Tibial artery (tissue), 4 donors: ENCODE measurements at regions of chr6 and their contacts with region 1.

Region 1: DNA sequence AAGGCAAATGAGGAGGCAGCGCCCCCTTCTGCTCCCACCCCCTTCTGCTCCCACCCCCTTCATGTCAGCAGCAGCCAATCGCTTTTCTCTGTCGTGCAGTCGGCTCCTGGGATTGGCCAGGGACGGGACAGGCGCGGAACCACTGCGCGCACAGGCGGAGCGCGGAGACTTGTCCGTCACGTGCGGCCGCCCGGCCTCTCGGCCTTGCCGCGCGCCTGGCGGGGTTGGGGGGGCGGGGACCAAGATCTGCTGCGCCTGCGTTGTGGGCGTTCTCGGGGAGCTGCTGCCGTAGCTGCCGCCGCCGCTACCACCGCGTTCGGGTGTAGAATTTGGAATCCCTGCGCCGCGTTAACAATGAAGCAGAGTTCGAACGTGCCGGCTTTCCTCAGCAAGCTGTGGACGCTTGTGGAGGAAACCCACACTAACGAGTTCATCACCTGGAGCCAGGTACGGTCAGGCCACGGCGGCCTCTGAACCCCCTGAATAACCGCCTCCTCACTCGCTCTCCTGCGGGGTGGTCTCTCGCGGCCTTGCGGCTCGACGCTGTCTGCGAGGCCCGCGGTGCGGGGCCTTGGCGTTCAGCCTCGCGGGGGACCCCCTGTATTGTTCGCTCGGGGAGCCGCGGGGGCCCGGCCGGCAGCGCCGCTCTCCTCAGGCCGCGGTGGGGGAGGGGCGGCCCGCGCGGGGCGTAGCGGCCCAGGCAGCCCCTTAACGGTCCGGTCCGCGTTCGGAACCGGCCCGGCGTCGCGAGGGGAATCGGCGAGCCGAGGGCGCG is at the start of gene HSF2:
- DNase-seq: peak; percentile 96 to 99
- H3K4me3 ChIP-seq: peak within 1 kb of the TSS; percentile 79 to 94
- H3K27ac ChIP-seq: peak within 1 kb of the TSS; percentile 79 to 85
- H3K4me1 ChIP-seq: peaks cover 0 to 17% (median 11%) of the 10 kb centered on the region in 4 donors
- H3K27me3 ChIP-seq: no peaks in the 10 kb centered on the region
- CTCF ChIP-seq: peak in 1 of 2 experiments; percentile 18

Region 2: DNA sequence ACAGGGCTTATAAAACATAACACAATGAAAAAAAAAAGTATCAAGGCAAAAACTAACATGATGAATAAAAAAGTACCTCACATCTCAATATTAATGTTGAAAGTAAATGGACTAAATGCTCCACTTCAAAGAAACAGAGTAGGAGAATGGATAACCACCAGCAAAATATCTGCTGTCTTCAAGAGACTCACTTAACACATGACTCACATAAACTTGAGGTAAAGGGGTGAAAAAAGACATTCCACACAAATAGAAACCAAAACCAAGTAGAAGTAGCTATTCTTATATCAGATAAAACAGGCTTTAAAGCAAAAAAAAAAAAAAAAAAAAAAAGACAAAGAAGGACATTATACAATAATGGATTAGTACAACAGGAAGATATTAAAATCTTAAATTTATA is 1152.2 kb before region 1 on chr6:
- intact Hi-C with region 1: no loop called
- DNase-seq: no peak
- H3K4me3 ChIP-seq: no peak overlapping the region
- H3K27ac ChIP-seq: no peak overlapping the region
- H3K4me1 ChIP-seq: no peaks in the 10 kb centered on the region
- H3K27me3 ChIP-seq: no peaks in the 10 kb centered on the region
- CTCF ChIP-seq: no peak

Region 3: GRCh38 chr6:122471107-122472021 is 71.8 kb after region 1 on chr6 and contains the start of gene SERINC1:
- intact Hi-C with region 1: loop called (anchors 5 kb)
- DNase-seq: peak; percentile 95 to 97
- H3K4me3 ChIP-seq: peak within 1 kb of the TSS; percentile 64 to 90
- H3K27ac ChIP-seq: peak within 1 kb of the TSS; percentile 88 to 96
- H3K4me1 ChIP-seq: peaks cover 0 to 47% (median 24%) of the 10 kb centered on the region in 4 donors
- H3K27me3 ChIP-seq: no peaks in the 10 kb centered on the region
- CTCF ChIP-seq: no peak